WTC11 (cell line): ENCODE measurements at regions of chr17 and their contacts with region 1.

Region 1: DNA sequence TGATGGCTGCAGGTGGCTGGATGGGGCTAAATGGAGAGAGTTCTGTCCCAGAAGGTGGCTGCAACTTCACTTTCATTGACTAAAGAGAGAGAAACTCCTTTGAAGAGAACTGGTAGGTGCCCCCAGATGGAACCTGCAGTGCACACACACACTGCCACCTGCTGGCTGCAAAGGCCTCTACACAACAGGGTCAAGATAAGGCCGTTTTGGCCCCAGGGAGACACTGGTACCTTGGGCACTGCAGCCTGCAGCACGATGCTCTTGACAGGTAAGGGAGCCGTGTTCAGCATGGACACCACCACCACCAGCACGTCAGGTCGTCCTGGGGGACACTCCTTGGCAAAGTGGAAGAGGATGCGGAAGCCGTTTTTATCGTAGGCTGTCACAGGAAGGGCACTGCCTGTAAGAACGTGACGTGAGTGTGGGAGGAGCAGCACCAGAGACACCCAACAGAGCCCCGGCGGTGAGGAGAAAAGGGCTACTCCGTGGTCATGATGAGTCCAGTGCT is 22.7 kb downstream of the GGA3 start:
- DNase-seq: peak; percentile 60
- ATAC-seq: peak; percentile 68
- H3K4me3 Mint-ChIP-seq: no peak overlapping the region
- H3K27ac Mint-ChIP-seq: peak overlapping the region; percentile 99
- H3K4me1 Mint-ChIP-seq: peaks cover 6% of the 10 kb centered on the region
- H3K27me3 Mint-ChIP-seq: no peaks in the 10 kb centered on the region
- CTCF ChIP-seq: peak; percentile 66

Region 2: GRCh38 chr17:75131280-75132017 is 107.3 kb before region 1 on chr17 and contains the start of gene NT5C:
- CTCF ChIA-PET with region 1: interaction called, 24 read pairs
- POLR2A ChIA-PET with region 1: no interaction called
- DNase-seq: peak; percentile 87
- ATAC-seq: peak; percentile 75
- H3K4me3 Mint-ChIP-seq: peak within 1 kb of the TSS; percentile 84
- H3K27ac Mint-ChIP-seq: peak within 1 kb of the TSS; percentile 93
- H3K4me1 Mint-ChIP-seq: peaks cover 20% of the 10 kb centered on the region
- H3K27me3 Mint-ChIP-seq: no peaks in the 10 kb centered on the region
- CTCF ChIP-seq: peak; percentile 59
- total RNA-seq, gene NT5C: 91.0 to 102 TPM (median 96.9 TPM) in 3 replicates

Region 3: GRCh38 chr17:75228305-75228704 is 10.4 kb before region 1 on chr17:
- CTCF ChIA-PET with region 1: interaction called, 62 read pairs
- POLR2A ChIA-PET with region 1: no interaction called
- DNase-seq: no peak
- ATAC-seq: no peak
- H3K4me3 Mint-ChIP-seq: no peak overlapping the region
- H3K27ac Mint-ChIP-seq: no peak overlapping the region
- H3K4me1 Mint-ChIP-seq: no peaks in the 10 kb centered on the region
- H3K27me3 Mint-ChIP-seq: no peaks in the 10 kb centered on the region; the same call in 1 of the 2 replicates
- CTCF ChIP-seq: no peak

Region 4: DNA sequence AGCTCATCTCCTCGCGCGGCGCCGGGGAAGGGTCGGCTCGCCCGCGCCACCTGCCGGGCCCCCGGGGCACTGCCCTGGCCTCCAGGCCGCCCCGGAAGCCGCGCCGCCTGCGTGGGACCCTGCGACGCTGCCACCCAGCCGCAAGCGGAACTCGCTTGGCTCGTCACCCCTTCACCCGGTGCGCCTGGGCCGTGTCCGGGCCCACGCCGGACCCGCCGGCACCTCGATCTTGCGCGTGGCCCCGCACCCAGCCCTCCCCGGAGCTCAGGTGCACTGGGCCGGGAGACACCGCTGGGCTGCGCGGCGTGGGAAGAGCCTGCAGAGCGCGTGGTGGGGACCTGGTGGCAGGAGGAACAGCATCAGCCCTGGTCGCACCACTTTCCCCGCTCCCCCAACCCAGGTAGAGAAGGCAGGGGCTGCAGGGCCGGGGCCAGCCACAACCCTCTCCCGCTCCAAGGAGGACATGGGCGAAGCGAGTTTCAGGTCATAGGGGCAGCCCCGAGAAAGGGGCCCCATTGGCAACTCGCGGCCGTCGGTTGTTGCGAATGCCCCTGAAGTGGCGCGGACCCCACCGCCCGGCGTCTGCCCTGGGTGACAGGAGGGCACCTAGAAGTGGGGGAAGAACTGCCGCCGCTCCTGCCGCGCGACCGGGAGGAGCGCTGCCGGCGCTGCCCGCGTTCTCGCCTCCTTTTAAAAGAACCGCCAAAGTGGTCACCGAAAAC is 32.7 kb after region 1 on chr17:
- CTCF ChIA-PET with region 1: interaction called, 155 read pairs
- POLR2A ChIA-PET with region 1: interaction called, 3 read pairs
- DNase-seq: peak; percentile 78
- ATAC-seq: peak; percentile 31
- H3K4me3 Mint-ChIP-seq: peak overlapping the region; percentile 79
- H3K27ac Mint-ChIP-seq: no peak overlapping the region
- H3K4me1 Mint-ChIP-seq: peaks cover 19% of the 10 kb centered on the region
- H3K27me3 Mint-ChIP-seq: no peaks in the 10 kb centered on the region
- CTCF ChIP-seq: peak; percentile 83

Region 5: GRCh38 chr17:75405365-75406221 is 166.9 kb after region 1 on chr17 and contains the start of gene GRB2:
- CTCF ChIA-PET with region 1: interaction called, 56 read pairs
- POLR2A ChIA-PET with region 1: no interaction called
- DNase-seq: peak; percentile 99
- ATAC-seq: peak; percentile 88
- H3K4me3 Mint-ChIP-seq: peak within 1 kb of the TSS; percentile 87
- H3K27ac Mint-ChIP-seq: no peak within 1 kb of the TSS
- H3K4me1 Mint-ChIP-seq: peaks cover 15% of the 10 kb centered on the region
- H3K27me3 Mint-ChIP-seq: peaks cover 3% of the 10 kb centered on the region; the same call in 1 of the 2 replicates
- CTCF ChIP-seq: no peak
- total RNA-seq, gene GRB2: 82.9 to 93.3 TPM (median 92.6 TPM) in 3 replicates

Region 6: DNA sequence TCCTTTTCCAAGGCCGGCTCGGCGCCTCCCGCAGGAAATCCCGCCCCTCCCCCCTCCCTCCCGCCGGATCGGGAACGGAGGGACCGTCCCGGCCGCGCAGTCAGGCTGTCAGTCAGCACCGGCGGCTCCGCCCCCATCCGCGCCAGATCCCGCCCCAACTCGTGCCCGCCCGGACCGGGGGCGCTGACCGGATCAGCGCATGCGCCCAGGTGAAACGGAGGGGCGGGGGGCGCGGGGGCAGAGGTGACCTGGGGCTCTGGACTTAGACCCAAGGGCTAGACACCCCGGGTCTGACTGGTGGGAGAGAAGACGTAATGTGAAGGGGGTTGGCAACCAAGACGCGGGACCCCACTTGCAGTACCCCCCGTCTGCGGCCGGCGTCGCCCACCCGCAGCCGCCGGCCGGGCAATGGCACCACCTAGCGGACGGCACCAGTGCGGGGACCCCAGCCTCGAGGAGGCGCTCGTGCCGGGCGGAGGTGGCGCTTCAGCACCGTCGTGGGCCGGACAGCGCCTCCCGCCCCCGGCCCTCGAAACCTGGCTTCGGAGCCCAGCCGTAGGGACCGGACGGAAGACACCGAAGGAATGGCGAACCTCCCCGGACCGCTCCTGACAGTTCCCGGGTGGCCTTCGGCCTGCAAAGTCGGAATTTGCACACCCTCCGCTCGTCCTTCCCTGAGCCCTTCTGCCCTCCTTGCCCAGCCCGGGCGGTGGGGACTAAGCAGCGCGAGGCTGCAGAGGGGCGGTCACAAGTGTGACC is 276.9 kb after region 1 on chr17 and contains the start of gene CASKIN2:
- CTCF ChIA-PET with region 1: interaction called, 10 read pairs
- POLR2A ChIA-PET with region 1: no interaction called
- DNase-seq: peak; percentile 98
- ATAC-seq: peak; percentile 76
- H3K4me3 Mint-ChIP-seq: peak within 1 kb of the TSS; percentile 80
- H3K27ac Mint-ChIP-seq: no peak within 1 kb of the TSS
- H3K4me1 Mint-ChIP-seq: peaks cover 20% of the 10 kb centered on the region
- H3K27me3 Mint-ChIP-seq: no peaks in the 10 kb centered on the region
- CTCF ChIP-seq: peak; percentile 90
- total RNA-seq, gene CASKIN2: 31.3 to 32.2 TPM (median 31.9 TPM) in 3 replicates